Activated CD4-positive, alpha-beta memory T cell treated with anti-CD3 and anti-CD28 coated beads, Interleukin-2, amount 10 ng/mL, durations not matched to agents 7 days and 5 days (primary cell): ENCODE measurements at regions of chr1 and their contacts with region 1.

Region 1: GRCh38 chr1:46303038-46303871 is at the starts of genes LRRC41 and UQCRH:
- DNase-seq: peak; percentile 94
- H3K4me3 Mint-ChIP-seq: peak within 1 kb of the TSS; percentile 95
- H3K27ac Mint-ChIP-seq: peak within 1 kb of the TSS; percentile 95
- H3K4me1 Mint-ChIP-seq: peaks cover 48% of the 10 kb centered on the region
- H3K27me3 Mint-ChIP-seq: no peaks in the 10 kb centered on the region
- total RNA-seq, gene LRRC41: 40.3 to 41.7 TPM
- total RNA-seq, gene UQCRH: 266 to 274 TPM

Region 2: GRCh38 chr1:46285730-46286477 is 17.4 kb before region 1 on chr1:
- CTCF ChIA-PET with region 1: interaction called, 7 read pairs
- POLR2A ChIA-PET with region 1: interaction called, 13 read pairs
- DNase-seq: peak; percentile 27
- H3K4me3 Mint-ChIP-seq: no peak overlapping the region
- H3K27ac Mint-ChIP-seq: no peak overlapping the region
- H3K4me1 Mint-ChIP-seq: peaks cover 13% of the 10 kb centered on the region
- H3K27me3 Mint-ChIP-seq: no peaks in the 10 kb centered on the region

Region 3: DNA sequence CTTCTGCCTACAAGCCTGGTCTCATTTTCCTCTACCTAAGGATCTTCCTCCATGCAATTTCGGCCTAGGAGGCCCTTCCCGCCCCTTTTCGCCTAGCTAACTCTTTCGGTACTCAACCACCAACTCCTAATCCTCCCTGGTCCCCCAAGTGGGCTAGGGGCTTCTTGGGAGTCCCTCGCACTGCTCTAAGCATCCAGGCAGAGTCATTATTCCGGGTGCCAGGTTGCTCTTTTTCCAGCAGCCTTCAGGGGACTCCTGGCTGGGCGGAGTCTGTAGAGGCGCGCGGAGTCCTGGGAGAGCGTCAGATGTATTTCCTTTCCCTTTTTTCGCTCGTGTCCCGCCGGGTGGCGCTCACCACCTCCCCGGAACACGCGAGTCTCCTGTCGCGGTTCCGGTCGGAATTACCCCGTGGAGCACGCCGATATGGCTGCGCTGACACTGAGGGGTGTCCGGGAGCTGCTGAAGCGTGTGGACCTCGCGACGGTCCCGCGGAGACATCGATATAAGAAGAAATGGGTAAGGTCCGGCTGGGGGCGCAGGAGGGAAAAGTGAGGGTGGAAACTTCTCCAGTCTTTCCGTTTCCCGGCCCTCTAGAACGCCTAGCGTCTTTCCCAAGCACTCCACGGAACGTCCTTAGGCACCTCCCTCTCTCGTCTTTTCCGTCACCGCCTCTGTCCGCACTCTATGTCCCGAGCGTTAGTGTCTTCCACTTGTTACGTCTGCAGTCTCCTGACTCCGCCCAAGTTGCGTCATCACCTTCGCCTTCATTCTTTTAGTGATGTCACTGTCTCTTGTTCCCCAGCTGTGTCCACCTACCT is 37.4 kb after region 1 on chr1 and contains the start of gene NSUN4:
- CTCF ChIA-PET with region 1: interaction called, 17 read pairs
- POLR2A ChIA-PET with region 1: interaction called, 41 read pairs
- DNase-seq: peak; percentile 88
- H3K4me3 Mint-ChIP-seq: peak within 1 kb of the TSS; percentile 98
- H3K27ac Mint-ChIP-seq: peak within 1 kb of the TSS; percentile 95
- H3K4me1 Mint-ChIP-seq: peaks cover 40% of the 10 kb centered on the region
- H3K27me3 Mint-ChIP-seq: no peaks in the 10 kb centered on the region
- total RNA-seq, gene NSUN4: 21.0 to 21.4 TPM

Region 4: GRCh38 chr1:46415514-46415913 is 112.3 kb after region 1 on chr1:
- CTCF ChIA-PET with region 1: no interaction called
- POLR2A ChIA-PET with region 1: no interaction called
- DNase-seq: no peak
- H3K4me3 Mint-ChIP-seq: no peak overlapping the region
- H3K27ac Mint-ChIP-seq: peak overlapping the region; percentile 56
- H3K4me1 Mint-ChIP-seq: peaks cover 30% of the 10 kb centered on the region
- H3K27me3 Mint-ChIP-seq: peaks cover 7% of the 10 kb centered on the region